ENCODE measurements at regions of chr13 and their contacts with region 1.

Region 1: GRCh38 chr13:67224148-67224846 is 5.8 kb downstream of the PCDH9 start:
- DNase-seq: peak; percentile 86
- ATAC-seq: peak; percentile 88

Region 2: GRCh38 chr13:65943024-65943423 is 1281.3 kb before region 1 on chr13:
- intact Hi-C with region 1: loop called (anchors 10 kb)
- DNase-seq: no peak
- ATAC-seq: peak; percentile 50

Region 3: GRCh38 chr13:67075239-67075638 is 149.1 kb before region 1 on chr13:
- intact Hi-C with region 1: loop called (anchors 5 kb)
- DNase-seq: no peak
- ATAC-seq: peak; percentile 62

Region 4: DNA sequence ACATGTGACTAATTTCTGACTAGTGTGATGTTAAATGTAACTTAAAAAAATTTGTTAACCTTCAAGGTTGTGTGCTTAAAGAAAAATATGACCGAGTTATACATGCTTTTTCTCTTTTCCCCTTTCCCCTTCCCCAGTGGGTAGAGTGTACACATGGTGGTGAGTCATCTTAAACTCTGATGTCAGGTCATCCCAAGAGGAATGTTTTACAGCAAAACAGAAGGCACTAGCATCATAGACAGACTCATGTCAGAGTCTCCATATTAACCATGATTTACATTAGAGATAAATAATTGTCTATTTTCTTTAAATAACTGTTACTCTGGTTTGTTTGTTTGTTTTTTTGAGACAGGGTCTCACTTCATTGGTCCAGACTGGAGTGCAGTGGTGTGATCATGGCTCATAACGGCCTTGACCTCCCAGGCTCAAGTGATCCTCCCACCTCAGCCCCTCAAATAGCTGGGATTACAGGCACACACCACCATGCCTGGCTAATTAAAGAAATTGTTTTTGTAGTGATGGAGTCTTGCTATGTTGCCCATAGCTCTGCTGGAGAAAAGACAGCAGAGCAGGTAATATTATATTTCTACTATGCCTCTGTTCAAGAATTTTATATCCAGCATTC is 166.3 kb after region 1 on chr13:
- intact Hi-C with region 1: no loop called
- DNase-seq: no peak
- ATAC-seq: no peak